PC-3 (cell line): ENCODE measurements at regions of chr2 and their contacts with region 1.

Region 1: DNA sequence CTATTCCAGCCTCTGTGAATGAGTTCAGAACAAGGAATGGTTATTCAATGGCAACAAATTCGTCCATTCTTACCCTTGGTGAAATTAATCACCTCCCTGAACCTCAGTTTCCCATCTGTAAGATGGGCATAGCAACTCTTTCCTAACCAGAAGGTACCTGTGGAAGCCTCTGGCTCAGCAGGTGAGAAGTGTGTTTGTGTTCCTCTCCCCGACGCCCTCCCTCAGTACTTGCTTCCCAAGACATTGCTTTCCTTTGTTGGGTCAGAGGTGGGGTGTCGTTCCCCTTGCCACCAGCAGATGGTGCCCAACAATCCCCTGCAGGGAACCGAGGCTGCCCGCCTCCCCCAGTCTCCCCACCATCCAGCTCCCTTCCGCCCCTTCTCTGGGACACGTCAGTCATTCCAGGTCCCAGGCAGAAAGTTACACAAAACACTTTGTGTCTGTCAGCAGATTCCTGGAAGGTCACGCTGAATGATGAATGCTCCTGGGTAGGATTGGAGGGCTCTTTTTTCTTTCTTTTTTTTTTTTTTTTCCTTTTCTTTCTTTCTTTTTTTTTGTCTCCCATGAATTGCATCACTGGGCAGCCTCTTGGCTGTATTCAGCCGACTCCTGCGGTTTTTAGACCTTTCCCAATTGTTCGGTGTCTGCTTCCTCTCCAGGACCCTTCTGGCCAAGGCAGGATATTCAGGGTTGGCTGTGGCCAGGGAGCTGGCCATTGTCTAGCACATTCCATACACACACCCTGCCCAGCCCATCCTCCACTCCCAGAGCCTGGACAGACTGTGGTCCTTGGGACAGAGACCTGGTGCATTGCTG is 117.3 kb downstream of the LPIN1 start:
- DNase-seq: peak; percentile 93
- ATAC-seq: peak; percentile 96
- H3K4me3 ChIP-seq: no peak overlapping the region
- H3K27ac ChIP-seq: peak overlapping the region; percentile 44
- H3K4me1 ChIP-seq: peaks cover 10% of the 10 kb centered on the region
- H3K27me3 ChIP-seq: no peaks in the 10 kb centered on the region
- CTCF ChIP-seq: peak; percentile 94

Region 2: DNA sequence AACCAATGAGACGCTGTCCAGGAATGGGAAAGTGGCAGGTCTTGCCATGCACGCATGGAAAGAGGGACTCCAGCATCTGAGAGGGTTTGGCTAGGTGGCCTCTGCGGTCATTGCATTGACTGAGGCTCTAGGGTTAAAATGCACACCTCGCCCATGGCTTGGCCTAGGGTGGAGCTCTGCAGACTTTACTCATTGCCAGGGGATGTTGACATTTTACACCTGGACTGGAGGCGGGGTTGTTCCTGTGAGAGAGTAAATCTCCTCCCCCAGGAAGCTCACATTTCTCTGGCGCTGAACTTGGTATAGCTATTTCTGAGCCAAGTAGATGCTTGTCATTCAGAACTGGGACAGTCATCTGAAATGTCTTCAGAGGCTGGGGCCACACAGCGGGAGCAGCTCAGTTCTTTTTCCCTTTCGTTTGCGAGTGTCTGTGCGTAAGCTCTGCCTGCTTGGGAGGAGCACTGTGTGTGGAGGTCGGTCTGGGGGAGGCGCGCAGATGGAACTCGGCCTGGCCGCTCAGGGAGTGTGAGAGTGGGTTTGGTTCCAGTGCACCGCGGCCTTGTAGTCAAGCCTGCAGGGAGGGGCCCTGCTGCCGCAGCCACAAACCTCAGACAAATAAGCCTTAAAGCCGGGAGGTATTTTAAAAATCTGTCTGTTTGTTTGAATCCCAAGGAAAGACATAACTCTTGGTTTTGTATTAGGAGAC is 40.8 kb before region 1 on chr2:
- CTCF ChIA-PET with region 1: no interaction called
- POLR2A ChIA-PET with region 1: no interaction called
- intact Hi-C with region 1: no loop called
- DNase-seq: peak; percentile 63
- ATAC-seq: peak; percentile 77
- H3K4me3 ChIP-seq: no peak overlapping the region
- H3K27ac ChIP-seq: no peak overlapping the region
- H3K4me1 ChIP-seq: no peaks in the 10 kb centered on the region
- H3K27me3 ChIP-seq: no peaks in the 10 kb centered on the region
- CTCF ChIP-seq: no peak

Region 3: DNA sequence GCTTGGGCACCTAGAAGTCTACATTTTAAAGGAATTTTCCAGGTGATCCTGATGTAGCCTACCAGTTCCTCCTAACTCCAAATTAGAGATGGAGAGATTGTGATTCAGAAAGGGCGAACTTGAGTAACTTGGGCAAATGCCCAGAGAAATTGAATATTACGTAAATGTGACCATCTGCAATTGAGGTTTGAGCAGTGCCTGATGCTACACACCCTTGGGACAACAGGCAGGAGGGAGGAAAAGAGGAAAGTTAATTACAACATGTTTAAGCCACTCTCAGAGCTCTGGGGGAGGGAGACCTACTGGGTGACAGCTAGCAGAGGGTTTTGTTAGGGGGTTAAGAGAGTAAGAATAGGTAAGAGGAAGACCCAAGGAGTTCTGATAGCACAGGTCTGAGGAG is 91.6 kb after region 1 on chr2:
- CTCF ChIA-PET with region 1: no interaction called
- POLR2A ChIA-PET with region 1: no interaction called
- intact Hi-C with region 1: no loop called
- DNase-seq: peak; percentile 10
- ATAC-seq: no peak
- H3K4me3 ChIP-seq: no peak overlapping the region
- H3K27ac ChIP-seq: no peak overlapping the region
- H3K4me1 ChIP-seq: no peaks in the 10 kb centered on the region
- H3K27me3 ChIP-seq: no peaks in the 10 kb centered on the region
- CTCF ChIP-seq: no peak

Region 4: DNA sequence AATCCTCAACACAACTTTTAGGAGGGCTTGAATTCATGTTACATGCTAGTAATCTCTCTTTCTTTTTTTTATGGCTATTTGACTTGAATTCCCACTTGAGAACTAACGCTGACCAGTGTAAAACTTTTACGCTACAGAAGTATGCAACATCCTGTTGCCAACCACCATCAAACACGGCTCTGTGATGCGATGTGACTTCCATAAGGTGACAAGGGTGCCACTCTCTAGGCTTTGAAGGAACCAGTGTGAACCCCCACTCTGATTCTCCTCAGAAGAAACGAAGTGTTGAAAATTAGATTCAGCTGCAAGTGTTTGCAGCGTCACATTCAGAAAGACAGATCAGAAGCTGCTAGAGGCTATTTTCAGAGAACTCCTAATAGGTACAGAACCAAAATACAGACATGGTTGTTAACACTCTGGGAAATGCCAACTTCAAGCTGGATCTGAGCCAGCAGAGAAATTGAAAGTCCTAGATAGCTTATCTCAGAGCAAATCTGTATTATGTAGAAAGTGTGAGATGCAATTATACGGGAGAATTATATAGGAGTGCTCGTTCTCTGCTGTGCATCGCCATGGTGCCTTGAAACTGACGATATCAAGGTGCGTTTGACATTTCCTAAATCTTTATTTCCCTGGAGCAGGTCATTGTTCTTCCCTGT is 153.9 kb after region 1 on chr2:
- CTCF ChIA-PET with region 1: no interaction called
- POLR2A ChIA-PET with region 1: no interaction called
- intact Hi-C with region 1: no loop called
- DNase-seq: no peak
- ATAC-seq: no peak
- H3K4me3 ChIP-seq: no peak overlapping the region
- H3K27ac ChIP-seq: no peak overlapping the region
- H3K4me1 ChIP-seq: no peaks in the 10 kb centered on the region
- H3K27me3 ChIP-seq: no peaks in the 10 kb centered on the region
- CTCF ChIP-seq: no peak

Region 5: DNA sequence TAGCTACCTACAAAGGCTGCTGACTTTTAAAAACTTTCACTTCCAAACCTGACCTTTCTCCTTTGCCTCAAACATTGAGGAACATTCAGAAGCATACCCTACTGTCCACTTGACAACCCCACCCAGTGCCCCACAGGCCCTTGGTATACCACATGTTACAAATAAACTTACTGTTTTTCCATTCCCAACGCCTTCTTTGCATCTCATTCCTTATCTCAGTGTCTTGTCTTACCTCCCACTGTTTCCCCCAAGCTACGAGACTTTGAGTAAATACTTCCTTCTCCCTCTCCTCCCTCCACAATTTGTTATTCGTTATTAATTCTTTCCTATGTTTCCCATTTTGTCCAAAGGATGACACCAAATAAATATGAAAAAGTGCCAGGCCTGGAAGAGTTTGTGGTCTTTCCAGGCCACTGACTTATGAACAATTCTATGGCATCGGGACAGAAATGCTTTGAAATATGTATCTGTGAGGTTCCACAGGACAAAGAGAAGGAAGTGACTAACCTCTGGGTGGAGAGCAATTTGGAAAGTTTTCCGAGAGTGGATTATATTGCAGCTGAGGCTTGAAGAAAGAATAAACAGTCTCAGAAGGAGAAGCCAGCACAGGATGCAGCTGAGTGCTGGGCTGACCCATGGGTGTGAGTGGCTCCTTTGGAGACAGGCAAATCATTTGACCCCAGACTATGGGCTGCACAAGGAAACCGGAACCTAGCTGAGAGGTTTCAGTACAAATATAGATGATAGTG is 291.8 kb after region 1 on chr2:
- CTCF ChIA-PET with region 1: interaction called, 3 read pairs
- POLR2A ChIA-PET with region 1: no interaction called
- intact Hi-C with region 1: loop called (anchors 1 kb)
- DNase-seq: peak; percentile 97
- ATAC-seq: peak; percentile 99
- H3K4me3 ChIP-seq: no peak overlapping the region
- H3K27ac ChIP-seq: peak overlapping the region; percentile 66
- H3K4me1 ChIP-seq: peaks cover 20% of the 10 kb centered on the region
- H3K27me3 ChIP-seq: no peaks in the 10 kb centered on the region
- CTCF ChIP-seq: no peak

Region 6: GRCh38 chr2:12282780-12283695 is 419.3 kb after region 1 on chr2:
- CTCF ChIA-PET with region 1: no interaction called
- POLR2A ChIA-PET with region 1: no interaction called
- intact Hi-C with region 1: loop called (anchors 1 kb)
- DNase-seq: no peak
- ATAC-seq: no peak
- H3K4me3 ChIP-seq: no peak overlapping the region
- H3K27ac ChIP-seq: no peak overlapping the region
- H3K4me1 ChIP-seq: peaks cover 36% of the 10 kb centered on the region
- H3K27me3 ChIP-seq: no peaks in the 10 kb centered on the region
- CTCF ChIP-seq: no peak

Region 7: GRCh38 chr2:12931186-12931844 is 1067.6 kb after region 1 on chr2:
- CTCF ChIA-PET with region 1: no interaction called
- POLR2A ChIA-PET with region 1: no interaction called
- intact Hi-C with region 1: loop called (anchors 10 kb)
- DNase-seq: peak; percentile 67
- ATAC-seq: peak; percentile 16; the same call in 1 of the 2 replicates
- H3K4me3 ChIP-seq: no peak overlapping the region
- H3K27ac ChIP-seq: peak overlapping the region; percentile 97
- H3K4me1 ChIP-seq: peaks cover 33% of the 10 kb centered on the region
- H3K27me3 ChIP-seq: no peaks in the 10 kb centered on the region
- CTCF ChIP-seq: peak; percentile 94